Activated B cell treated with CpG ODN at 0.5 μM for 24 hours (primary cell): ENCODE measurements at regions of chr16 and their contacts with region 1.

Region 1: DNA sequence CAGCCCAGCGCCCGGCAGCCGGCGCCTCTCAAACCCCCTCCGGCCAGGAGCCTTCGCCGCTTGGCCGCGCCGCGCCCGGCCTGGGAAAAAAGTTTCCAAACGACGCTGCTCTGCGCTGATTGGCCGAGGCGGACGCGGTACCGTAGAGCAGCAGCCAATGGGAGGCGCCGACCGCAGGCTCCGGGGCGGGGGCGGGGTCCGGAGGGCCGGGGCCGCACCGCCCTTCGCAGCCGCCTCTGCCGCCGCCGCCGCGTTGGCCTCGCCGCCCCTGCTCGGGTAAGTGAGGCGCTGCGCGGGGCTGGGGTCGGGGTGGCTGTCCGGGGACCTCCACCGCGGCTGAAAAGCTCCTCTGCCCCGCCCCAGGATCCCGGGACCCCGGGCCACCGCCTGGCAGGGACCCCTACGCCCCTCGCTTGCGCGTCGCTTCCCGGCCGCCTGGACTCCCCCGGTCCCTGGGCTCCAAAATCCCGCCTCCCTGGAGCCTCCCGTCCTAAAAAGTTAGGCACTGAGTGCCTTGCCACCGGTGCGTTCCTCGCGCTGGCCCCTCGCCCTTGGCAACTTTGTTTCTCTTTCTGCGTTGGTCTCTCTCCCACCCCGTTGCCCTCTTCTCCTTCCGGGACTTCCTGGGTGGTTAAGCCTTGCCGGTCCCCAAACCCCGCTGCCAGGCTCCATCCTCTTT is at the start of gene NDE1:
- DNase-seq: peak; percentile 76
- ATAC-seq: peak; percentile 94
- H3K4me3 Mint-ChIP-seq: peak within 1 kb of the TSS; percentile 98
- H3K27ac Mint-ChIP-seq: peak within 1 kb of the TSS; percentile 97
- H3K4me1 Mint-ChIP-seq: peaks cover 59% of the 10 kb centered on the region
- H3K27me3 Mint-ChIP-seq: no peaks in the 10 kb centered on the region
- CTCF ChIP-seq: no peak
- total RNA-seq, gene NDE1: 140 and 163 TPM in 2 replicates

Region 2: DNA sequence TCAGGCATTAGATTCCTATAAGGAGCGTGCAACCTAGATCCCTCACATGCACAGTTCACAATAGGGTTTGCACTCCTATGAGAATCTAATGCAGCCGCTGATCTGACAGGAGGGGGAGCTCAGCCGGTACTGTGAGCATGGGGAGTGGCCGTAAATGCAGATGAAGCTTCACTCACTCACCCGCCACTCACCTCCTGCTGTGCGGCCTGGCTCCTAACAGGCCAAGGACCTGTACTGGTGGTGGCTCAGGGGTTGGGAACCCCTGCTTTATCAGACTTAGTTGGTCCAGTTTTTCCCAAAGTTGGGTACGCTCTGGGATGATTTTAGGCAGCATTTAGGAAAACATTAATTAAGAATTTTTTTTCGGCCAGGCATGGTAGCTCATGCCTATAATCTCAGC is 111.0 kb before region 1 on chr16:
- CTCF ChIA-PET with region 1: no interaction called
- POLR2A ChIA-PET with region 1: no interaction called
- intact Hi-C with region 1: no loop called
- DNase-seq: no peak
- ATAC-seq: no peak
- H3K4me3 Mint-ChIP-seq: no peak overlapping the region
- H3K27ac Mint-ChIP-seq: no peak overlapping the region
- H3K4me1 Mint-ChIP-seq: no peaks in the 10 kb centered on the region
- H3K27me3 Mint-ChIP-seq: no peaks in the 10 kb centered on the region
- CTCF ChIP-seq: no peak

Region 3: GRCh38 chr16:15592324-15592723 is 57.8 kb before region 1 on chr16:
- CTCF ChIA-PET with region 1: no interaction called
- POLR2A ChIA-PET with region 1: interaction called, 10 read pairs
- intact Hi-C with region 1: loop called (anchors 2 kb)
- DNase-seq: peak; percentile 21
- ATAC-seq: no peak
- H3K4me3 Mint-ChIP-seq: no peak overlapping the region
- H3K27ac Mint-ChIP-seq: peak overlapping the region; percentile 84
- H3K4me1 Mint-ChIP-seq: peaks cover 65% of the 10 kb centered on the region
- H3K27me3 Mint-ChIP-seq: no peaks in the 10 kb centered on the region
- CTCF ChIP-seq: no peak

Region 4: GRCh38 chr16:15607700-15608396 is 42.3 kb before region 1 on chr16:
- CTCF ChIA-PET with region 1: no interaction called
- POLR2A ChIA-PET with region 1: interaction called, 10 read pairs
- intact Hi-C with region 1: no loop called
- DNase-seq: no peak
- ATAC-seq: no peak
- H3K4me3 Mint-ChIP-seq: no peak overlapping the region
- H3K27ac Mint-ChIP-seq: peak overlapping the region; percentile 41
- H3K4me1 Mint-ChIP-seq: no peaks in the 10 kb centered on the region
- H3K27me3 Mint-ChIP-seq: no peaks in the 10 kb centered on the region
- CTCF ChIP-seq: no peak

Region 5: GRCh38 chr16:15636392-15636873 is 13.7 kb before region 1 on chr16:
- CTCF ChIA-PET with region 1: interaction called, 20 read pairs
- POLR2A ChIA-PET with region 1: interaction called, 115 read pairs
- intact Hi-C with region 1: no loop called
- DNase-seq: no peak
- ATAC-seq: peak; percentile 62
- H3K4me3 Mint-ChIP-seq: peak overlapping the region; percentile 76
- H3K27ac Mint-ChIP-seq: peak overlapping the region; percentile 88
- H3K4me1 Mint-ChIP-seq: peaks cover 99% of the 10 kb centered on the region
- H3K27me3 Mint-ChIP-seq: no peaks in the 10 kb centered on the region
- CTCF ChIP-seq: no peak